Activated CD4-positive, alpha-beta T cell treated with anti-CD3 and anti-CD28 coated beads for 36 hours (primary cell): ENCODE measurements at regions of chr6 and their contacts with region 1.

Region 1: GRCh38 chr6:109009236-109009961 is 85.2 kb downstream of the SESN1 start:
- DNase-seq: peak; percentile 95
- ATAC-seq: peak; percentile 89
- H3K4me3 Mint-ChIP-seq: peak overlapping the region; percentile 94
- H3K27ac Mint-ChIP-seq: peak overlapping the region; percentile 98
- H3K4me1 Mint-ChIP-seq: peaks cover 60% of the 10 kb centered on the region
- H3K27me3 Mint-ChIP-seq: no peaks in the 10 kb centered on the region

Region 2: DNA sequence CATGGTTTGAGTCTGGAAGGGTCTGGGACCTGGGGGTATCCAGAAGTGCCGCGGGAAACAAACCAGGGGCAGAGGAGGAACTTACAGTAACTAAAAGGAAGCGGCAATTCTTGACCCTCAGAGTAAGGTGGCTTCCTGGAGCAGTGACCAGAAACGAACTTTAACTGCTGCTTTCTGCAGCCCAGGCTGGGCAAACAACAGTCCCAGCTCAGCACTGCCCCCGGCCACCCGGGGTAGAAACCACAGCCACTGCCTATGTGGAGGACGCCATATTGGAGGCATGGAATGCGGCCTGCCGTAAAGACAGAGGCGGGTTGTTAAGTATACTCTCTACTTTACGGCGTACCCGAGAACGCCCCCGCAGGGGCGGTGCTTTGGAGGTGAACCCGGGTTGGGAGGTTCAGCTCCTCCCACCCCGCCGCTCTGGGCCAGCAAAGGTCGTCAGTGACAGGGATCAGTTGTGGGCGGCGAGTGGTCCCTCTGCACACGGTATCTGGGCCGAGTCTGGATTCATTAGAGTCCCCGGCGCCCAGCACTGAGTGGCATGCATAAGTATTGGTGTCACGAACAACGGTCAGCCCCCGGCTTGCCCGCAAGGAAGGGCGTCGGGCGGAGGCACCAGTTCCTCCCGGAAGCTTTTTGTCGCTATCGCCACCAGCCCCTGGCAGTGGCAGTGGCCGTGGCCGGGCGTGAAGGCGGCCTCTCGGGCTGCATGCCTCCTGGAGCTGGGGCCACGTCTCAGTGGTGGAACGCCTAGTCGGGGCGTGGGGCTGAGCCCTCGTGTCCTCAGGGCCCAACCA is 1549.9 kb before region 1 on chr6 and contains the start of gene PDSS2:
- CTCF ChIA-PET with region 1: no interaction called
- POLR2A ChIA-PET with region 1: no interaction called
- intact Hi-C with region 1: loop called in 1 of 2 experiments (anchors 5 kb)
- DNase-seq: peak; percentile 100
- ATAC-seq: peak; percentile 96
- H3K4me3 Mint-ChIP-seq: peak within 1 kb of the TSS; percentile 82
- H3K27ac Mint-ChIP-seq: peak within 1 kb of the TSS; percentile 93
- H3K4me1 Mint-ChIP-seq: peaks cover 19% of the 10 kb centered on the region
- H3K27me3 Mint-ChIP-seq: no peaks in the 10 kb centered on the region
- total RNA-seq, gene PDSS2: 11.4 to 11.7 TPM

Region 3: GRCh38 chr6:108446629-108447150 is 562.7 kb before region 1 on chr6:
- CTCF ChIA-PET with region 1: no interaction called
- POLR2A ChIA-PET with region 1: no interaction called
- intact Hi-C with region 1: loop called in 1 of 2 experiments (anchors 5 kb)
- DNase-seq: no peak
- ATAC-seq: no peak
- H3K4me3 Mint-ChIP-seq: no peak overlapping the region
- H3K27ac Mint-ChIP-seq: no peak overlapping the region
- H3K4me1 Mint-ChIP-seq: peaks cover 23% of the 10 kb centered on the region
- H3K27me3 Mint-ChIP-seq: peaks cover 30% of the 10 kb centered on the region

Region 4: GRCh38 chr6:108874470-108875160 is 134.8 kb before region 1 on chr6:
- CTCF ChIA-PET with region 1: no interaction called
- POLR2A ChIA-PET with region 1: interaction called, 3 read pairs
- intact Hi-C with region 1: loop called (anchors 1 kb)
- DNase-seq: peak; percentile 79
- ATAC-seq: peak; percentile 87
- H3K4me3 Mint-ChIP-seq: peak overlapping the region; percentile 51
- H3K27ac Mint-ChIP-seq: peak overlapping the region; percentile 89
- H3K4me1 Mint-ChIP-seq: peaks cover 41% of the 10 kb centered on the region
- H3K27me3 Mint-ChIP-seq: peaks cover 8% of the 10 kb centered on the region

Region 5: DNA sequence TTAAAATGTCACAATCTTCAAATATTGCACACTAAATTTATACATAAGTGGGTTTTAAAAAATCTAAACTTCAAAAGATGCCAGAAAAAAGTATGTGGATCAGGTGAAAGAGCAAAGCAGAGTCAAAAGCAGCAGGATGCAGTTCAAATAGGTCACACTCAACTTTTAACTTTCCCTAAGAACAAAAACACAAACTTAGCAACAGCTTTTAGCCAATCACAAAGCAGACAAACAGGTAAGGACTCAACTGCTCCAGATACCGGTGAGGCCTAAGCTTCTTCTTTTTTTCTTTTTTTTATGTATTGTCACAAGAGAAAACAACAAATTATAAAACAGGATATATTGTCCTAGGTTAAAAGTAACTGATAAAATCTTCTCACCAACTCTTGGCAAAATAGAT is 10.5 kb after region 1 on chr6:
- CTCF ChIA-PET with region 1: interaction called, 10 read pairs
- POLR2A ChIA-PET with region 1: no interaction called
- intact Hi-C with region 1: no loop called
- DNase-seq: no peak
- ATAC-seq: peak; percentile 42
- H3K4me3 Mint-ChIP-seq: no peak overlapping the region
- H3K27ac Mint-ChIP-seq: no peak overlapping the region
- H3K4me1 Mint-ChIP-seq: peaks cover 39% of the 10 kb centered on the region
- H3K27me3 Mint-ChIP-seq: no peaks in the 10 kb centered on the region

Region 6: GRCh38 chr6:109095027-109095834 is 85.8 kb after region 1 on chr6 and contains the start of gene CEP57L1:
- CTCF ChIA-PET with region 1: no interaction called
- POLR2A ChIA-PET with region 1: interaction called, 5 read pairs
- intact Hi-C with region 1: loop called (anchors 1 to 2 kb)
- DNase-seq: peak; percentile 97
- ATAC-seq: peak; percentile 79
- H3K4me3 Mint-ChIP-seq: peak within 1 kb of the TSS; percentile 91
- H3K27ac Mint-ChIP-seq: peak within 1 kb of the TSS; percentile 99
- H3K4me1 Mint-ChIP-seq: peaks cover 46% of the 10 kb centered on the region
- H3K27me3 Mint-ChIP-seq: no peaks in the 10 kb centered on the region
- total RNA-seq, gene CEP57L1: 23.8 to 36.9 TPM

Region 7: DNA sequence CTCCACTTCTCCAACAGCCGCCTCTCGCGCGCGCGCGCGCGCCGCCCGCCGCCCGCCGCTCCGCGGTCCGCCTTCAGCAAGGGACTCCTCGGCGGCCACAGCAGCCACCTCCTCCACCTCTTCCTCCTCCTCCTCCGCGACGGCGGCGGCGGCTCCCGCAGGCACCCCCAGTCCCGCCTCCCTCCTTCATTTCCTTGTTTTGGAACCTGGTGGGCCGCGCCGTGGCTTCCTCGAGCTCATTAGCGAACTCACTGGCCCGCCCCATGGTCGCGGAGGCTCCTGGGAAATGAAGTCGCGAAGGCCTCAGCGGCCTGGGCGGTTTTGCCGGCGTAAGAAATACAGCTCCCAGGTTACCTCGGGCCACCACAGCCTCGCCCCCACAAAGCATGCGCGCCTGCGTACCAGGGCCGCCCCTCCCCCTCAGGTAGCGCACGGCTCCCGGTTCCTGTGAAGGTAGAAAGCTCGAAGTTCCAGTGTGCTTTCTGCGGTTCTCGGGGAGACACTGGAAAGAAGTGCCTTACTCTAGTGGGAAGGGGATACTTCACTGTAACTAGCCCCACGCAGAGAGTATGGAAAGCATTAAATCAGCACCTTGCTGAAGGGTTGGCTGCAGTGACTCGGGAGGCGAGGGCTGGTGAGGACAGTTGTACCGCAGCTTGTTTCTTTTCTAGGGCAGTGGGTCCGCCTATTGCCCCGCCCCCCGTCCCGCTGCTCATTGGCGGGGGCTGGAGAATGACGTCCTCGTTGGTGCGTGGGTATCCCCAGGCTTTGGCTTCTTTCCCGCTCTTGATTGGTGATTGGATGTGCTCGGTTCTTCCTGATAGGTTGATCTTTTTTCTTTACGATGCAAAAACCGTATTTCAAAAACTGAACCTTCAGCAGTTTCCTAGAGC is 1806.1 kb after region 1 on chr6 and contains the start of gene CDK19:
- CTCF ChIA-PET with region 1: no interaction called
- POLR2A ChIA-PET with region 1: no interaction called
- intact Hi-C with region 1: loop called in 1 of 2 experiments (anchors 10 kb)
- DNase-seq: peak; percentile 99
- ATAC-seq: peak; percentile 85
- H3K4me3 Mint-ChIP-seq: peak within 1 kb of the TSS; percentile 88
- H3K27ac Mint-ChIP-seq: peak within 1 kb of the TSS; percentile 98
- H3K4me1 Mint-ChIP-seq: peaks cover 32% of the 10 kb centered on the region
- H3K27me3 Mint-ChIP-seq: no peaks in the 10 kb centered on the region
- total RNA-seq, gene CDK19: 14.7 to 15.7 TPM